Aorta (tissue), 5 donors: ENCODE measurements at regions of chr6 and their contacts with region 1.

Region 1: DNA sequence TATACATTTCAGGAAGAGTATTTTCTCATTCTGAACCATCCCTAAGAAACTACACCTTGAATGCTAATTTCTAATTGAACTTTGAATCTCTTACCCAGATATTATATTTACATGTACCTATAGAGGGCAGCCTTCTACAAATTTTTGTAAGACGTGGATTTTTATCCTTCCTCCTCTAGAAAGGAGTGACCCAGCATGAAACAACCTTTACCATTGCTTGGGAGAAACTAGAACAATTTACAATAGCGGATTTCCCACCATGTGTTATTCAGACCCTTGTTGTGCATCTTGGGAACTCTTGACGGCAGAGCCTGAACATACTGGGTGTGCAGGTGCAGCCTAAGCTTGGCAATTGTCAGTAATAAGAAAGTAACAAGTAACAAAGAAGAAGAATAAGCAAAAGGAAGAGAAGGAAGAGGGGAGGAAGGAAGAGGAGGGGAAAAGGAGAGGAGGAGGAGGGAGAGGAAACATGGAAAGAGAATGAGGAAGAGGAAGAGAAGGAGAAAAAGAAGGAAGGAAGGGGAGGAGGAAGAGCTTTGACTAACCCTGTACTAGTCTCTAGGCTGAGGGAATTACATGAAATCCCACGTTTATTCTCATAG is 10.8 kb upstream of the TAAR1 start:
- DNase-seq: no peak
- ATAC-seq: peak; percentile 67
- H3K4me3 ChIP-seq: no peak overlapping the region
- H3K27ac ChIP-seq: no peak overlapping the region
- H3K4me1 ChIP-seq: no peaks in the 10 kb centered on the region
- H3K27me3 ChIP-seq: no peaks in the 10 kb centered on the region

Region 2: GRCh38 chr6:132623106-132623845 is 46.5 kb before region 1 on chr6:
- intact Hi-C with region 1: no loop called
- DNase-seq: no peak
- ATAC-seq: no peak
- H3K4me3 ChIP-seq: no peak overlapping the region
- H3K27ac ChIP-seq: no peak overlapping the region
- H3K4me1 ChIP-seq: no peaks in the 10 kb centered on the region
- H3K27me3 ChIP-seq: no peaks in the 10 kb centered on the region

Region 3: DNA sequence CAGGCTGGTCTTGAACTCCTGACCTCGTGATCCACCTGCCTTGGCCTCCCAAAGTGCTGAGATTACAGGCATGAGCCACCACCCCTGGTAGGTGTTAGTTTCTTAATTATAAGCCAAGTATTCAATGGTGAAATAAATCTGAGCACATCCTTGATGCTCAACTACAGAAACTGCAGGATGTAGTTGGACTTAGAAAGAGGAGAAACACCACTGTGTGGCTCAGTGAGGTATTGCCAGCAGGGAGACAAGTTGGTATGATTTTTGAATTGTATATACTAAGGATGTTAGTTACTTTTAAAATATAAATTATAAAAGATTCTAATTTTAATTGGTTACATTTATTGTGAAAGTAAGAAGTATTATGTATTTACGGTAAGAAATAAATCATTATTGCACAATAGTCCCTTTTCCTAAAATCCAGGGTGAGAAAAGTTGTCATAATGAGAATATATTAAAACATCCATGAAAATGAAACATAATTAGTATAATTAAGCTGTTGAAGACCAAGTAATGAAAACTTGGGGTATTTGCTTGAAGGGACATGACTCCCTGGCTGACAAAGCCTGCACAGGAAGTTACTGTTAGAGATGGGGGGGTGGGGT is 111.1 kb after region 1 on chr6:
- intact Hi-C with region 1: loop called in 1 of 2 experiments (anchors 5 kb)
- DNase-seq: no peak
- ATAC-seq: no peak
- H3K4me3 ChIP-seq: no peak overlapping the region
- H3K27ac ChIP-seq: no peak overlapping the region
- H3K4me1 ChIP-seq: no peaks in the 10 kb centered on the region
- H3K27me3 ChIP-seq: no peaks in the 10 kb centered on the region

Region 4: DNA sequence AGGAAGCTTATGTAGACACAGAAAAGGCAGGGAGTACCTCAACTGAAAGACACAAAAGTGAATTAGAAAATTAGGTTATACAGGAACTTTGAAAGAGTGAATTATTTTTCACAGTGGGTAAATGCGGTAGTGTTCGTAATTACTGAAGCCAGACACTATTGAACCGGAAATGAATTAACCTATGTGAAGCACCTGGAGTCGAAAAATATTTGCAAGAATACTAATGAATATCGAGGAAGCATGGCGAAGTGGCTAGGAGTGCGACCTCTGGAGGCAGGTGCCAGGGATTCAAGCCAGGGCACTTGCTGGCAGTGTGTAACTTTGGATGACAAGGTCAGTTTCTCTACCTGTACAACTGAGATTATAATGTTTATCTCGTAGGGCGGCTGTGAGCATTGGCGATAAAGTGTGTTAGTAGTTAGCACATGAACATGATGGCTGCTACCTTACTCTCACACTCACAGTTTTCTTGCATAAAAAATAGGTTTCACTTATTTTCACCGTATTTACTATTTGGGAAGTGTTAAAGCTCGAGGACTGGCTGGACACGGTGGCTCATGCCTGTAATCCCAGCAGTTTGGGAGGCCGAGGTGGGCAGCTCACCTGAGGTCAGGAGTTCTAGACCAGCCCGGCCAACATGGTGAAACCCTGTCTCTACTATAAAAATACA is 129.2 kb after region 1 on chr6:
- intact Hi-C with region 1: loop called in 1 of 2 experiments (anchors 10 kb)
- DNase-seq: peak; percentile 73 to 82
- ATAC-seq: peak; percentile 79
- H3K4me3 ChIP-seq: peak overlapping the region; percentile 53 to 88
- H3K27ac ChIP-seq: no peak overlapping the region
- H3K4me1 ChIP-seq: no peaks in the 10 kb centered on the region
- H3K27me3 ChIP-seq: no peaks in the 10 kb centered on the region